Adrenal gland (tissue), 19 donors: ENCODE measurements at regions of chr13 and their contacts with region 1.

Region 1: GRCh38 chr13:41377446-41377845 is 66.4 kb downstream of the NAA16 start:
- DNase-seq: no peak
- H3K4me3 ChIP-seq: no peak overlapping the region
- H3K27ac ChIP-seq: no peak overlapping the region
- H3K4me1 ChIP-seq: no peaks in the 10 kb centered on the region
- H3K27me3 ChIP-seq: no peaks in the 10 kb centered on the region
- CTCF ChIP-seq: no peak
- POLR2A ChIP-seq: no peak

Region 2: DNA sequence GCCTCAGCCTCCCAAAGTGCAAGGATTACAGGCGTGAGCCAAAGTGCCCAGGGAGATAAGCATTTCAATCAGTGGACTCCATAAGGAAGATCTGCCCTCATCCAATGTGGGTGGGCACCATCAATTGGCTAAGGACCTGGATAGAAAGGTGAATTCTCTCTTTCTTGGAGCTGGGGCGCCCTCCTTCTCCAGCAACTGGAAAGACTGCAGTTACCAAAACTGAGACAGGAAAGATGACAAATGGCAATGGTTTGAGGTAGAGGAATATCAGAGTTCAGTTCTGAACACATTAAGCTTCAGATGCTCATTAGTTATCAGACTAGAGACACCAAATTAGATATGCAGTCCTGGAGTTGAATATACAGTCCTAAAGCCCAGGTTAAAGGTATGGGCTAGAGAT is 347.8 kb before region 1 on chr13:
- intact Hi-C with region 1: no loop called
- DNase-seq: no peak
- H3K4me3 ChIP-seq: no peak overlapping the region
- H3K27ac ChIP-seq: no peak overlapping the region
- H3K4me1 ChIP-seq: peaks cover 0 to 27% of the 10 kb centered on the region in 2 donors
- H3K27me3 ChIP-seq: no peaks in the 10 kb centered on the region
- CTCF ChIP-seq: no peak
- POLR2A ChIP-seq: no peak

Region 3: GRCh38 chr13:41512441-41512840 is 135.0 kb after region 1 on chr13:
- intact Hi-C with region 1: loop called in 1 of 2 experiments (anchors 5 kb)
- DNase-seq: no peak
- H3K4me3 ChIP-seq: no peak overlapping the region
- H3K27ac ChIP-seq: no peak overlapping the region
- H3K4me1 ChIP-seq: no peaks in the 10 kb centered on the region
- H3K27me3 ChIP-seq: no peaks in the 10 kb centered on the region
- CTCF ChIP-seq: no peak
- POLR2A ChIP-seq: no peak